ENCODE measurements at regions of chr11 and their contacts with region 1.

Region 1: DNA sequence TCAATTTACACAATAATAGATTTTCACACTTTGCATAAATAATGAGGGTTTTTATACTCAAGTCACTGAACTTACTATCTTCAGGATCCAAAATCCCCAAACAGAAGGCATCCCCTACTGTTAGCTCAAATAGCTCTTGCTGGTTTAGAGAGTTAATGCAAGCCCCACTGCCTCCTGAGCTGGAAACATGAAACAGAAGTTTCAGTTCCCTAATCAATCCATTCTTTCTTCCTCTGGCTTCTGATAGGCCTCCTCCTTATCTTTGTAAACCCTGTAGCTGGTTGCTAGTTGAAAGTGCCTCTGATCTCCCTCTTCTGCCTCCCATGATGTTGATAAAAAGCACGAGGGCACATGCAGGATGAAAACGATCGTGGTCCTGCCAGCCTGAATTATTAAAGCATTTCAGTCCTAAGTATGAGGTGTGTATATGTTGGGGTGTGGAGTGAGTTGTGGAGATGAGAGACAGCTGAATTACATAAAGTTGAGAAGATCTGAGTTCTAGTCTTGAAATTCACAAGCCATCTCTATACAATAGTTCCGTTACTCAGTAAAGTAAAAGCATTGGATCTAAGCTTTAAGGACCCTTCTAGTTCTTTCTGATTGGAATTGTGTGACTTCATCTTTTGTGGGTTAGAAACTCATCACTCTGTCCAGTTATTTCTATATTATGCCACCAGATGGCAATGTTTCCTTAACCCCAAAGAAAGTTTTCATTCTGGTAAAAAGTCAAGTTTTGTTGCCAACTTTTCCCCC is 35.0 kb upstream of the EHF start:
- DNase-seq: no peak
- H3K4me3 ChIP-seq: peak overlapping the region in 1 of 2 donors; percentile 9
- H3K27ac ChIP-seq: no peak overlapping the region
- H3K4me1 ChIP-seq: no peaks in the 10 kb centered on the region
- H3K27me3 ChIP-seq: no peaks in the 10 kb centered on the region
- CTCF ChIP-seq: peak; percentile 49 to 66 (median 59)

Region 2: GRCh38 chr11:34633990-34634693 is 48.2 kb after region 1 on chr11:
- intact Hi-C with region 1: no loop called
- DNase-seq: no peak
- H3K4me3 ChIP-seq: no peak overlapping the region
- H3K27ac ChIP-seq: no peak overlapping the region
- H3K4me1 ChIP-seq: no peaks in the 10 kb centered on the region
- H3K27me3 ChIP-seq: no peaks in the 10 kb centered on the region
- CTCF ChIP-seq: no peak

Region 3: DNA sequence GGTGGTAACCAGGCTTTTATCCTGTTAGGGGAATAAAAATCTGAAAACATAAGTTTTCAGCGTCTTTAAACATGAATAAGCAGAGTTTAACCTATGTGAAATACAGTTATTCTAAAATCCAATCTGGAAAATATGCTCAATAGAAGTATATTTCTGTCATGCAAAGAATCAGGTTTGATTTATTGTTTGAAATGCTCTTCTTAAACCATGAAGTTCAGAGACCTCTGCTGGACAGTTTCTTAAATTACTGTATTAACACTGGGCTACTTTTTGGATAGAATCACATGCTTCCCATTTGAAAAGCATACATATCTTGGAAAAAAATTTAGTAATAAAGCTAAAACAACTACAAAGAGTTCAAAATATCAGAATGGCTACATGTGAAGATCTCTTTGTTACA is 304.9 kb after region 1 on chr11:
- intact Hi-C with region 1: loop called (anchors 5 kb)
- DNase-seq: no peak
- H3K4me3 ChIP-seq: no peak overlapping the region
- H3K27ac ChIP-seq: no peak overlapping the region
- H3K4me1 ChIP-seq: no peaks in the 10 kb centered on the region
- H3K27me3 ChIP-seq: no peaks in the 10 kb centered on the region
- CTCF ChIP-seq: peak in 2 of 3 experiments; percentile 17 to 32

Region 4: DNA sequence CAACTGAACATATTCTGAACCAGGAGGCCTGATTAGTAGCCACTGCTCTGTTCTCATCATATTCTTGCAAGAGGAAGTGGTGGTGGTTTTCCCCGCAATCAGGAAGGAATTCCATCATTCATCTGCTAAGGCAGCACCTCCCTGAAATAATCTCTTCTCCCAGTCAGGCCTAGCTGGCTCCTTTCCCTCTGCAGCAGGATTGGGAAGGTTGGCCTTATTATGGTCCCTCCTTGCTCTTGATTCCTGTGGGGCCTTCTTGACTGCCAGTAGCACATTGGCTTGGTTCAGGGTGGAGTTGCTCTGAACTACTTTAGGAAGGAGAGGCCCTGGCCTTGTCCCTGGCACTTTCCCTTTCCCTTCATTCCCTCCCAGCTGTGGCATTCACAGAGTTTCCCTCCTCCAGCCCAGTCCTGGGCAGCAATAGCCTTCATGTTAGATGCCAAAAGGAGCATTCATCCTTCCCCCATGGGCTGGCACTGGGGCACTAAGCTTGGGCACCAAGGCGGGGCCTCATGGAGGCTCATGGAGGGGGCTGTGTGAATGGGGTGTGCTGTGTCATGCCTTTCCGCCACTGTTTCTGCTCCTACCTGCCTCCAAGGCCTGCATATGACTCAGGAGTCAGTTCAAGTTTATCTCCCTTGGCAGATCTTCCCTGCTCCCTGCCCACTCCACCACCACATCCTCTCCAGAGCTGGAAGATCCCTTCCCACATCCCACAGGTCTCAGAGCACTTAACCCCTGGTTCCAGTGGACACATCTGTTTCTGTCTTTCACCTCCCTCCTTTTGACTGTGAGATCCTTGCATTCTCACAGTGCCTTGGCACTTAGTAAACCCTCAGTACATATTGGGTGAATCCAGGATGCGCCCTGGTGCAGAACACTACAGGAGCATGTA is 525.5 kb after region 1 on chr11:
- intact Hi-C with region 1: loop called (anchors 5 kb)
- DNase-seq: no peak
- H3K4me3 ChIP-seq: no peak overlapping the region
- H3K27ac ChIP-seq: peak overlapping the region in 1 of 2 donors; percentile 33
- H3K4me1 ChIP-seq: peaks cover 0 to 15% of the 10 kb centered on the region in 2 donors
- H3K27me3 ChIP-seq: no peaks in the 10 kb centered on the region
- CTCF ChIP-seq: no peak

Region 5: GRCh38 chr11:35391922-35392813 is 806.3 kb after region 1 on chr11:
- intact Hi-C with region 1: loop called (anchors 10 kb)
- DNase-seq: peak in 1 of 2 donors; percentile 87
- H3K4me3 ChIP-seq: peak overlapping the region; percentile 39 to 44
- H3K27ac ChIP-seq: peak overlapping the region; percentile 66 to 74
- H3K4me1 ChIP-seq: peaks cover 4 to 27% of the 10 kb centered on the region in 2 donors
- H3K27me3 ChIP-seq: no peaks in the 10 kb centered on the region
- CTCF ChIP-seq: peak; percentile 91 to 95 (median 94)

Region 6: GRCh38 chr11:35485656-35486322 is 899.9 kb after region 1 on chr11:
- intact Hi-C with region 1: loop called (anchors 10 kb)
- DNase-seq: peak; percentile 10 to 84
- H3K4me3 ChIP-seq: no peak overlapping the region
- H3K27ac ChIP-seq: no peak overlapping the region
- H3K4me1 ChIP-seq: no peaks in the 10 kb centered on the region
- H3K27me3 ChIP-seq: no peaks in the 10 kb centered on the region
- CTCF ChIP-seq: peak; percentile 64 to 93 (median 89)